Colonic mucosa (tissue), 4 donors: ENCODE measurements at regions of chr11 and their contacts with region 1.

Region 1: DNA sequence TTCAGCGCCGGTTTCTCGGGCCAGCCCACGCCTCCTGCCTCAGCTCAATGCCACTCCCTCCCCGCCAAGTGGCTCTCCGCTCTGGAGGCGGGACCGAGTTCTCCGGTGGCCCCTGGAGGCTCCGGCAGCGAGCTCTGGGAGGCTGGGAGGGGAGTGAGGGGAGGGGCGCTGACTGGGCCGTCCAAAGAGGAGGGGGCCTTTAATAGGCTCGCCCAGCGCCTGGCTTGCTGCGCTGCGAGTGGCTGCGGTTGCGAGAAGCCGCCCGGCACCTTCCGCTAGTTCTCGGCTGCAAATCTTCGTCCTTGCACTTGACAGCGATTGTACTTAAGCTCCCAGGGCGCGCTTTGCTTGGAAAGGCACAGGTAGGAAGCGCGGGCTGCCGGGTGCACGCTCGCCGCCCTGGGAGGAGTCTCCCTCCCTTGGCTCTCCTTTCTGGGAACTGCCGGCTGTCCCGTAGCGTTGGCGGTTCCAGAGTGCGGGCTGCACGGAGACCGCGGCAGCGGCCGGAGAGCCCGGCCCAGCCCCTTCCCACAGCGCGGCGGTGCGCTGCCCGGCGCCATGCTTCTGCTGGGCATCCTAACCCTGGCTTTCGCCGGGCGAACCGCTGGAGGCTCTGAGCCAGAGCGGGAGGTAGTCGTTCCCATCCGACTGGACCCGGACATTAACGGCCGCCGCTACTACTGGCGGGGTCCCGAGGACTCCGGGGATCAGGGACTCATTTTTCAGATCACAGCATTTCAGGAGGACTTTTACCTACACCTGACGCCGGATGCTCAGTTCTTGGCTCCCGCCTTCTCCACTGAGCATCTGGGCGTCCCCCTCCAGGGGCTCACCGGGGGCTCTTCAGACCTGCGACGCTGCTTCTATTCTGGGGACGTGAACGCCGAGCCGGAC is at the start of gene ADAMTS15:
- DNase-seq: peak; percentile 87
- H3K4me3 ChIP-seq: peak within 1 kb of the TSS; percentile 42
- H3K27ac ChIP-seq: peak within 1 kb of the TSS; percentile 64
- H3K4me1 ChIP-seq: peaks cover 7% of the 10 kb centered on the region
- H3K27me3 ChIP-seq: no peaks in the 10 kb centered on the region
- CTCF ChIP-seq: no peak
- total RNA-seq, gene ADAMTS15: 4.0 to 9.9 TPM

Region 2: GRCh38 chr11:129386795-129387397 is 1061.8 kb before region 1 on chr11:
- intact Hi-C with region 1: no loop called
- DNase-seq: peak; percentile 79
- H3K4me3 ChIP-seq: no peak overlapping the region
- H3K27ac ChIP-seq: peak overlapping the region; percentile 54
- H3K4me1 ChIP-seq: no peaks in the 10 kb centered on the region
- H3K27me3 ChIP-seq: no peaks in the 10 kb centered on the region
- CTCF ChIP-seq: no peak

Region 3: GRCh38 chr11:130623670-130624668 is 175.3 kb after region 1 on chr11:
- intact Hi-C with region 1: loop called (anchors 10 kb)
- DNase-seq: no peak
- H3K4me3 ChIP-seq: no peak overlapping the region
- H3K27ac ChIP-seq: no peak overlapping the region
- H3K4me1 ChIP-seq: no peaks in the 10 kb centered on the region
- H3K27me3 ChIP-seq: no peaks in the 10 kb centered on the region
- CTCF ChIP-seq: no peak

Region 4: DNA sequence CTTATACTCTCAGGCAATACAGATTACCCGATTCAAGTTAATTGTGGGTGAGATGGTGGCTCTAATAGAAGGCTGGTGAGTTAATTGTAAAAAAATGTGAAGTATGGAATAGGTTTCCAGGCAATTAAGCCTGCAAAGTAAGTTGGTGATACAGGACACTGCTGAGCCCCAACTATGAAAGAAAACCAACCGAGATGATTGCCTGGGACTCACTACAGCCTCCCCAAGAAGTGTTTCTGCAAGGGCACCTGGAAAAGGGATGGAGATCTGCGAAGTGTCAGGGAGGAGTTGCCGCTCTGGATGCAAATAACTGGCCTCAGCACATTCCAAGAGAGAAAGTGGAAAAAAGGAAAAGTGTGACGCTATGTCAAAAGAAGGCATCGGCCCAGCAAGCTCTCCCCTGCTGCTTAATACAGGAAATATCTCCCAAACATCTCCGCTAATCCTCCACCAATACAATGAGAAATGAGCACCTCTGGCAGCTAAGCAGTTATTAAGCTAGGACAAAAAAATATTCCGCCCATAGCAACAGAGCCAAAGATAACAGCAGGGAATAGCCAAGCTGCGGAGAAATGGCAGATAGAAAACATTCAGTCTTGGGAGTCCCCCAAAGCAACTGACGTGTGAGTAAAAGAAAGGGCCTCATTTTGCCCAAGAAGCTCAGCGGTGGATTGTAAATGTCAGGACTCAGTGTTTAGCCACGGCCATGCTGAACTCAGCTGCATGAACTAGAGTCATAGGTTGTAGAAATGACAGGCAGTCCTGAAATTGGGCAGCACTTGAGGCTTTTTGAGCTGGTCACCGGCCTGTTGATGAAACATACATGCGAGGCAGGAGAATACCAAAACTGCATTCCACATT is 333.9 kb after region 1 on chr11:
- intact Hi-C with region 1: loop called (anchors 5 kb)
- DNase-seq: no peak
- H3K4me3 ChIP-seq: no peak overlapping the region
- H3K27ac ChIP-seq: no peak overlapping the region
- H3K4me1 ChIP-seq: no peaks in the 10 kb centered on the region
- H3K27me3 ChIP-seq: no peaks in the 10 kb centered on the region
- CTCF ChIP-seq: no peak